Activated naive CD4-positive, alpha-beta T cell treated with anti-CD3 and anti-CD28 coated beads, Interleukin-2, amount 10 ng/mL, durations not matched to agents 7 days and 5 days (primary cell): ENCODE measurements at regions of chr11 and their contacts with region 1.

Region 1: DNA sequence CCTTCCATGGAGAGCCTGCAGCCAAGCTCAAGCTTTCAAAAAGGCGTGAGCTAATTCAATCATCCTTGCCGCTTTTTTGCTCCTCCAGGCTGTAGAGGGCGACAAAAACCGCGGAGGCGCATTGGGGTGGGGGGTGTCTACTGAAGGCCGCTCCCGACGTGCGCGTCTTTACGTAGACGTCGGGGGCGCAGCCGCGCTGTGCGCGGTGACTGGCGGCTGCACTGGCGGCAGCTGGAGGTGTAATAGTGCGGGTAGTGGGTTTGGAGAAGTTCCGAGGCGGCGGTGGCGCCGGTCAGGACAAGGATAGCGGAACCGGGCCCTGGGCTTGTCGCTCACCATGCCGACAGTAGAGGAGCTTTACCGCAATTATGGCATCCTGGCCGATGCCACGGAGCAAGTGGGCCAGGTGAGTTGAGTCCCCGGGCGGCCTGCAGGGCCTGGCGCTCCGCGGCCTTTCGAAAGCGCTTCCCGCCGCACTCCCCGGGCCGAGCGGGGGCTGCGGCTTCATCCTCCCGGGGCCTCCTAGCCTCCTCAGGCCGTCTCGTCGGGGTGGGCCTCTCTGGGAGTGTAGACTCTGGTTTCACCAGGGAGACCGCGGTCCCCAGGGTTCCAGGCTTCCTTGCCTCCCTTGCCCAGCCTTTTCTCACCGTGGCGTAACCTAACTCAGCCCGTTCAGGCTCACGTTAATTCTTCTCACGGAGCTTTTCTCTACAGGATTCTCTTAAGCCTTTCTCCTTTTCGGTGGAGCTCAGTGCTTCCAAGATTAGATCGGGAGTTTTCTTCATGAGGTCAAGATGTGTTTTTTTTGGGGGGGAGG is at the start of gene API5:
- DNase-seq: peak; percentile 95
- H3K4me3 Mint-ChIP-seq: peak within 1 kb of the TSS; percentile 96
- H3K27ac Mint-ChIP-seq: peak within 1 kb of the TSS; percentile 90
- H3K4me1 Mint-ChIP-seq: peaks cover 47% of the 10 kb centered on the region
- H3K27me3 Mint-ChIP-seq: peaks cover 7% of the 10 kb centered on the region

Region 2: DNA sequence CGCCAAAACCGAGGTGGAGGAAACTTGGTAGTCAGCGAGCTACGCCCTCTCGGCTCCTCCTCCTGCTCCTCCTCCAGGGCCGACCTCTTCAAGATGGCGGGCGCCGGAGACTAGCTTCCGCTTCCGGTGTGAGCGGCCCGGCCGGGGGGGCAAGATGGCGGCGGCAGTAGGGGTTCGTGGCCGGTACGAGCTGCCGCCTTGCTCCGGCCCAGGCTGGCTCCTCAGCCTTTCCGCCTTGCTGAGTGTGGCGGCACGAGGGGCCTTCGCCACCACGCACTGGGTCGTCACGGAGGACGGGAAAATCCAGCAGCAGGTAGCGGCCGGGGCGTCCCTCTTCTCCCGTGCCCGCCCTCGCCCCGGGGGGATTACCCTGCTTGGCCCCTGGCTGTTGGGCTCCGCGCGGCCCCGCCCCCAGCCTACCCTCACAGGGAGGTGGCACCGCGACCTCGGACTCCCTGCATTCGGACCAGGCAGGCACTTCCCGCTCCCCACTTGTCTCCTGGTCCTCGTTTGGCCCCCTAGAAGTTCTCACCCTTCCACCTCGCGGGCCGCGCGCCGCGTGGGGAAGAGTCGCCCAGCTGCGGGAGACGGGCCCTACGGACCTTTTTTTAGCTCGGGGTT is 46.9 kb after region 1 on chr11 and contains the start of gene TTC17:
- CTCF ChIA-PET with region 1: interaction called, 14 read pairs
- DNase-seq: peak; percentile 97
- H3K4me3 Mint-ChIP-seq: peak within 1 kb of the TSS; percentile 94
- H3K27ac Mint-ChIP-seq: peak within 1 kb of the TSS; percentile 97
- H3K4me1 Mint-ChIP-seq: peaks cover 39% of the 10 kb centered on the region
- H3K27me3 Mint-ChIP-seq: peaks cover 4% of the 10 kb centered on the region